Naive thymus-derived CD4-positive, alpha-beta T cell (primary cell): ENCODE measurements at regions of chr12 and their contacts with region 1.

Region 1: DNA sequence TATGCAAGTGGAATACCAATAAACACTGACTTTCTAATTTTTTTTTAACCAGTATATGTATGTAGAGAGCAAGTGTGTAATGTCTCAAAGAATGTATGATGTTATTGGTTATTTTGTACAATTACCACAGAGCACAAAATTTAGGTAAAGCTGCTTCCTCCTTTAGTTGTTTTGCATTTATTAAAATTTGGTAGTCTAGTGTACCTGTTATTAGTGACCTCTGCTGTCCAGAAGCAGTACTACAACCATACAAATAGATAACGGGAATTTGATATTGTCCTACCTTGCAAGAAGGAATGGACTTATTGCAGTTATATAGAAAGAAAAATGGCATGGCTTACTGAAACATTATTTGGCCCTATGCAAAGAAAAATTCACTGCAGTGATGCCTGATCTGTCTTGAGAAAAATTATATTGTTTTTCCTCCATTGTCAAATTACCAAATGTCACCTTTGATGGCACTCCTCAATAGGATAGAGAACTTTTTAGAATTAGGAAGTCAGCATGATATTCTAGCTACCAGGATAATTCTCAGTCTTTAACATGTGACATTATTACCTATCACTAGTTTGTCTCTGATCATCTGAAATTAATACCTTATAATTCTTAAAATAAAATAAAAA is 153.9 kb upstream of the RMST start:
- DNase-seq: peak in 7 of 9 donors; percentile 14 to 58 (median 54)
- ATAC-seq: peak; percentile 66
- H3K4me3 ChIP-seq: no peak overlapping the region
- H3K4me3 Mint-ChIP-seq: no peak overlapping the region
- H3K27ac ChIP-seq: no peak overlapping the region
- H3K27ac Mint-ChIP-seq: no peak overlapping the region
- H3K4me1 ChIP-seq: no peaks in the 10 kb centered on the region
- H3K4me1 Mint-ChIP-seq: peaks cover 0 to 2% (median 0%) of the 10 kb centered on the region in 7 donors
- H3K27me3 ChIP-seq: no peaks in the 10 kb centered on the region
- H3K27me3 Mint-ChIP-seq: peaks cover 5 to 25% (median 17%) of the 10 kb centered on the region in 5 donors

Region 2: DNA sequence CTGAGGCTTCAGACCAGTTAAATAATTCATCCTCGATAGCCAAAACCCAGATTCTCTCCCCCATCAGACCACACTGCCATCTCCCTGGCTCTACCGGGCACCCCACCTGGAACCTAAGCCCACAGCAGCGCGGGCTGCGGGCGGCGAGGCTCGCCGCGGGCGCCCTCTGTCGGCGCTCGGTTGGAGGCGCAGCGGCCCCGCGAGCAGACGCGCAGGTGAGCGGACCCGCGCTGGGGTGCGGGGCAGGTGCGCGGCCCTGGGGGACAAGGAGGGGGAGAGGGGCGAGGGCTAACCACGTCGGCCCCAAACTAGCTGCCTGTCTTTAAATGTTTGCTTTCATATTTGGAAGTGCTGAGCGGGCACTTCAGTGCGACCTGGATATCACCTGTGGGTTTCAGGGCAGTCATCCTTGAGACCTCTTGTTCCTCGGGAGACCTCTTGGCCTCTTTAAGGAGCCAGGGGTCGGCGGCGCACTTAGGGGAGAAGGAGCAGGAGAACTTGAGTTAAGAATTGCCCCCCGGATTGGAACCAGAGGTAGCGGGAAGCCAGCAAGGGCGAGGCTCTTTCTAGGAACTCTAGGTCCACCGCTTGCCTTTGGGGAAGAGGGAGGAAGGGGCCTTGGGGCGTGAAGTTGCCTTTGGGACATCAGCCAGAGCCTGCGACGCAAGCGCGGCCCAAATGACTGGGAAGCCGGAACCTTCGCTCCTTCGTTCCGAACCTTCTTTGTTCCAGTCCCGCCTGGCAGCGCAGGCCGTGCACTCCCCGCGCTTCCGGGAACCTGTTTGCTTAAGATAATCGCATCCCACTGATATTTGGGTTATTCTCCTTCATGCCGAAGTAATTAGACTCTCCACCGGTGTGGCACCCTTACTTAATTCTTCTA is 323.0 kb before region 1 on chr12:
- CTCF ChIA-PET with region 1: interaction called, 3 read pairs
- POLR2A ChIA-PET with region 1: no interaction called
- intact Hi-C with region 1: loop called (anchors 1 to 5 kb)
- DNase-seq: peak in 8 of 9 donors; percentile 23 to 61 (median 48)
- ATAC-seq: peak; percentile 89
- H3K4me3 ChIP-seq: peak overlapping the region; percentile 52
- H3K4me3 Mint-ChIP-seq: peak overlapping the region; percentile 60 to 90 (median 84)
- H3K27ac ChIP-seq: no peak overlapping the region
- H3K27ac Mint-ChIP-seq: peak overlapping the region in 1 of 9 donors; percentile 49
- H3K4me1 ChIP-seq: peaks cover 0 to 4% of the 10 kb centered on the region in 2 donors
- H3K4me1 Mint-ChIP-seq: peaks cover 7 to 9% (median 8%) of the 10 kb centered on the region in 7 donors
- H3K27me3 ChIP-seq: no peaks in the 10 kb centered on the region
- H3K27me3 Mint-ChIP-seq: peaks cover 13 to 47% (median 33%) of the 10 kb centered on the region in 5 donors

Region 3: GRCh38 chr12:97006585-97006984 is 302.1 kb before region 1 on chr12:
- CTCF ChIA-PET with region 1: no interaction called
- POLR2A ChIA-PET with region 1: interaction called, 10 read pairs
- intact Hi-C with region 1: no loop called
- DNase-seq: no peak
- ATAC-seq: no peak
- H3K4me3 ChIP-seq: no peak overlapping the region
- H3K4me3 Mint-ChIP-seq: no peak overlapping the region
- H3K27ac ChIP-seq: no peak overlapping the region
- H3K27ac Mint-ChIP-seq: no peak overlapping the region
- H3K4me1 ChIP-seq: no peaks in the 10 kb centered on the region
- H3K4me1 Mint-ChIP-seq: no peaks in the 10 kb centered on the region
- H3K27me3 ChIP-seq: no peaks in the 10 kb centered on the region
- H3K27me3 Mint-ChIP-seq: peaks cover 13 to 53% (median 25%) of the 10 kb centered on the region in 5 donors

Region 4: DNA sequence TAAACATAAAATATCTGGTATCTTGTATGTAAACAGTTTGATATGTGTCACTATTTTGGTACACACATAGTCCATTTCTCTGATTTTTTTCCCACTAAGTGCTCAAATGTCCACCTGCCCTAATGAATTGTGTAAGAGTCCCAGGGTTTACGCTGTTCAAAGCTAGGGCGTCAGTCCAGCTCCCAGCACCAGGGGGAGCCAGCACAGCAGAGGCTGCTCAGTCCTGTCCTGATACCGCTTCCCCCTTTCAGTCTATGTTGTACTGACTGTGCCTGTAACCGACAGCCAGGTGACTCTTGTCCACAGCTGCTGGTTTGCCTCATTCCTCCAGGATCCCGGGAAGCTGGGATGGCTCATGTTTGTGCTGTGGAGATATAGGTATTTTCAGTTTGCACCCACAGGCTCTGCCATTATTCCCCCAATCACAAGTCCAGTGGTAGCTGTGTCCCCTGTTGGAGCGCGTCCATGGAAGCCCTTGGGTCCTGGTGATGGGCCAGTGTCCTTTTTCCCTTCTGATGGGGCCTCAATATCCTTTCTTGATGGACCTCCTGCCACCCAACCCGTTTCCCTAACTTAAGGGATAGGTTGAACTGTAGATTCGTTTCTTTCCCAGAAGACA is 159.6 kb before region 1 on chr12:
- CTCF ChIA-PET with region 1: no interaction called
- POLR2A ChIA-PET with region 1: no interaction called
- intact Hi-C with region 1: loop called in 1 of 2 experiments (anchors 1 kb)
- DNase-seq: peak; percentile 4 to 49 (median 10)
- ATAC-seq: peak; percentile 85
- H3K4me3 ChIP-seq: no peak overlapping the region
- H3K4me3 Mint-ChIP-seq: no peak overlapping the region
- H3K27ac ChIP-seq: no peak overlapping the region
- H3K27ac Mint-ChIP-seq: no peak overlapping the region
- H3K4me1 ChIP-seq: no peaks in the 10 kb centered on the region
- H3K4me1 Mint-ChIP-seq: peaks cover 0 to 5% (median 0%) of the 10 kb centered on the region in 7 donors
- H3K27me3 ChIP-seq: no peaks in the 10 kb centered on the region
- H3K27me3 Mint-ChIP-seq: peaks cover 7 to 22% (median 14%) of the 10 kb centered on the region in 5 donors